SK-N-SH (cell line): ENCODE measurements at regions of chr12 and their contacts with region 1.

Region 1: DNA sequence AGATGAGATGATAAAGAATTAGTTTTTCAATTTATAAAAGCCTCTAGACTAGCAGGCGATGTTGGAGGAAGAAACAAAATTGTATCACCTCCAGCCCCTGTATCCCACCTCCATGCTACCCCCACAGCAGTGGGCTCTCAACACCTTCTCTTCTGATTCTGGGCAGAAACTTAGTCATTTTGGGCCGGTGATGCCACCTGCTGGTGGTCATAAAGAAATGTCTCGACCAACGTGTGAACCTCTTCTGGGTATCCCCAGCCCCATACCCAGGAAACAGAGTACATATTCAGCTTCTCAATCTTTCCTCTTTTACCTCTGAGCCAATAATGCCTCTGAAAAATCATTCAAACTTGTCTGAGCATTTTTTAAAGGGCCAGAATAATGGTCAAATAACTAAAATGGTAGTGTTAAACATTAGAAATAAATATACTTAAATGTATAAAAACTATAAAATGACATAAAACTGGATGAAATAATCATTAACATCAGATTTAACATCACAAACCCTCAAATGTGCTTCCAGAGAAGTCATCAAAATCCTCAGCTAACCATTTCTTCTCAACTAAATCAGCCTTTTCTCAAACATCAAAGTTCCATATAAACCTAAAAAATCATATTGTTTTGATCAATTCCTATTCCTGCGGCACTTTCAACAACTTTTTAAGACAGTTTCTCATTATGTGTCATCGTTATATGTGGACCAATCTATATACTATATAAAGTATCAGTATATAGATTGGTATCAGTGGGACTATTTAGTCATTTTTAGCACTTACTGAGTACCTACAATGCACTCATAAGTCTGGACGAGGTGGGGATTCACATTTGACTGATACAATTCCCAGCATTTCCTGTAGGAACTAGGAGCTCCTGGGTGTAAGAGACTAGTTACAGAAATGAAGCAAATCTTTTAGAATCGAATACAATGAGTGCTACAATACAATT is 69.4 kb downstream of the ATXN2 start:
- DNase-seq: peak; percentile 78
- H3K4me3 ChIP-seq: no peak overlapping the region; a peak in 1 of 4 replicates
- H3K27ac ChIP-seq: 0 out of 4 replicates have a peak overlapping the region, but pooled peaks of 1 of the 2 experiments have one; percentile 12
- H3K4me1 ChIP-seq: no peaks in the 10 kb centered on the region
- H3K27me3 ChIP-seq: no peaks in the 10 kb centered on the region
- CTCF ChIP-seq: peak; percentile 80
- EP300 ChIP-seq: no peak
- RAD21 ChIP-seq: peak; percentile 68

Region 2: DNA sequence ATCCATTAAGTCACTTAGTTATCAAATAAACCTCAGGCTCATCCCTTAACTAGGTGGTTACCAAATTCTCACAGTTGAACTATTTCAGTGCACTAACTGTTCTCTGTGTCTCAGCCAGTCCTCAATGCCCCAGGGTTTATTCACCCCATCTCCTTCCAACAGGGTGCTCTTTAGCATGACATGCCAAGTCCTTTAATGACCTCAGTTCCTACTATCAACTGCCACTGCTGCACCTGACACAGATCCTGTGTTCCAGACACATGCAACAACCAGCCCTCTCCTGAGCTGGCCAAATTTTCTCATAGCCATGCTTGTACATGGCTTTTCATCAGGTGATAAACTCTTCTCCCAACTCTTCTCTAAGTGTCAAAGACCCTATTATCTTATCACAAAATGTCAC is 10.6 kb before region 1 on chr12:
- CTCF ChIA-PET with region 1: interaction called, 11 read pairs
- POLR2A ChIA-PET with region 1: no interaction called
- DNase-seq: no peak
- H3K4me3 ChIP-seq: no peak overlapping the region
- H3K27ac ChIP-seq: no peak overlapping the region
- H3K4me1 ChIP-seq: no peaks in the 10 kb centered on the region
- H3K27me3 ChIP-seq: no peaks in the 10 kb centered on the region
- CTCF ChIP-seq: no peak
- EP300 ChIP-seq: no peak
- RAD21 ChIP-seq: no peak

Region 3: GRCh38 chr12:111544032-111544431 is 14.3 kb after region 1 on chr12:
- CTCF ChIA-PET with region 1: interaction called, 11 read pairs
- POLR2A ChIA-PET with region 1: no interaction called
- DNase-seq: no peak
- H3K4me3 ChIP-seq: no peak overlapping the region
- H3K27ac ChIP-seq: no peak overlapping the region
- H3K4me1 ChIP-seq: no peaks in the 10 kb centered on the region; a peak in 1 of 4 replicates
- H3K27me3 ChIP-seq: no peaks in the 10 kb centered on the region
- CTCF ChIP-seq: no peak
- EP300 ChIP-seq: no peak
- RAD21 ChIP-seq: no peak

Region 4: DNA sequence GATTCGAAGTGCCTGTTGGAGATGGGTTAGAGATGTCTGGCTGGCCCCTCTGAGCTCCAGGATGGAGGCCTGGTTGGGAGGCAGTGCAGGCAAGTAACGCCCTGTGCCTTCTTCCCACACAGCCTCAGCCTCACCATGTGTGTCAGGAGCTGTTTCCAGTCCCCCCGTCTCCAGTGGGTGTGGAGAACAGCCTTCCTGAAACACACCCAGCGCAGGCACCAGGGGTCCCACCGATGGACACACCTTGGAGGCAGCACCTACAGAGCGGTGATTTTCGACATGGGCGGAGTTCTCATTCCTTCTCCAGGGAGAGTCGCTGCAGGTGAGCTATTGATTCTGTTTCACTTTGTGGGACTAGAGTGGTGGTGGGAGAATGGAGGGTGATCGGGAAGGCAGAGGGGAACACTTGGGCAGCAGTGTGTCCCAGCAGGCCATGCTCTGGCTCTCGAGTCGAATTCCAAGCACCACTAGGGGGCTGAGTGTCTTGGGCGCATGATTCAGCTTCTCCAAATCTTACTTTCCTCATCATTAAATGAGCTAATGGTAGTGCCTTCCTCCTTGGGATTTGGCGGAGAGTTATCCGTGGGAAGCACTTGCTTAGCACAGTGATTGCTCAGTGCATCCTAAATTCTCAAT is 163.0 kb after region 1 on chr12:
- CTCF ChIA-PET with region 1: no interaction called
- POLR2A ChIA-PET with region 1: no interaction called
- DNase-seq: no peak
- H3K4me3 ChIP-seq: no peak overlapping the region
- H3K27ac ChIP-seq: no peak overlapping the region
- H3K4me1 ChIP-seq: no peaks in the 10 kb centered on the region
- H3K27me3 ChIP-seq: no peaks in the 10 kb centered on the region
- CTCF ChIP-seq: peak; percentile 39; the same call in 1 of the 2 replicates
- EP300 ChIP-seq: no peak
- RAD21 ChIP-seq: no peak